HepG2 (cell line): ENCODE measurements at regions of chr12 and their contacts with region 1.

Region 1: GRCh38 chr12:29429999-29430698 is 49.2 kb upstream of the ERGIC2 start:
- DNase-seq: no peak
- ATAC-seq: no peak
- H3K4me3 ChIP-seq: no peak overlapping the region
- H3K27ac ChIP-seq: no peak overlapping the region
- H3K4me1 ChIP-seq: no peaks in the 10 kb centered on the region
- H3K27me3 ChIP-seq: no peaks in the 10 kb centered on the region
- CTCF ChIP-seq: no peak
- EP300 ChIP-seq: no peak
- POLR2A ChIP-seq: no peak
- RAD21 ChIP-seq: no peak

Region 2: DNA sequence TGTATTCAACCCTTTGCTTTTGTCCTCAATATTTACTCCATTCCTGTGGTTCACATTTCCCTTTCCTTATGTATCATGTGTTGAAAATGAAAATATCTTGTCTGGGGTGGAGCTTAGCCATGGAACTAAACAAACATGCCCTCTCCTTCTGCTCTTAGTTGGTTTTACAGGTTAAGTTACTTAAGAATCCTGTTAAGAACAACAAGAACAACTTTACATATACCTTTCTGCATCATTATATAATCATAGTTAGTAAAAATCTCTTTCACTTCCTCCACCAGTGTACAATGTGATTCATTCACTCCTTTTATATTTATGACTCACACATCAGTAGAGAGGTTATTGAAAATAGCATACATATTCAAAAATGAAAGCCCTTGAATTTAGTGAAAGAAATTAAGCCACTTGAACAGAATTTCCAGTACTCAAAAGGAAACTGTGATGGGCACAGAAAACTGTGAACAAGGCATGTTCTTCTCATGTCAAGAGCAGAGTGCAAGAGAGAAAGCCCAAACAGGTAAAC is 932.2 kb before region 1 on chr12:
- CTCF ChIA-PET with region 1: no interaction called
- POLR2A ChIA-PET with region 1: no interaction called
- in situ Hi-C with region 1: no loop called
- intact Hi-C with region 1: no loop called
- DNase-seq: no peak
- ATAC-seq: no peak
- H3K4me3 ChIP-seq: no peak overlapping the region
- H3K27ac ChIP-seq: no peak overlapping the region
- H3K4me1 ChIP-seq: no peaks in the 10 kb centered on the region
- H3K27me3 ChIP-seq: no peaks in the 10 kb centered on the region
- CTCF ChIP-seq: no peak
- EP300 ChIP-seq: no peak
- POLR2A ChIP-seq: no peak
- RAD21 ChIP-seq: no peak

Region 3: DNA sequence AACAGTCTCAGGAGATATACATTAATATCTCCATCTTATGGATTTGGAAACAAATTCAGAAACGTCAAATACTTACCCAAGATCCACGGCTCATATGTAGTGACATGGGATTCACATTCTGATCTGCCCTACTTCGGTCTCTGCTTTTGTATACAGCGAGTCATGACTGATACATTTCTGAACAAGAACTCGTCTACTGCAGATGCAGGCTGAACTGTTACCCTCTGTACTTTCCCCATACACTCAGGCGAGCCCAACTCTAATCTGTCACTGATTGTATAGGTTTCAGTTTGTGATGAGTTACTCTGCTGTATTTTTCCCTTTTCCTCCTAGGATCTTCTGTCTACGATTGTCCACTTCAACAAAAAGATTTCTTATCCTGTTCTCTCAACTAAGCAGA is 798.3 kb before region 1 on chr12:
- CTCF ChIA-PET with region 1: no interaction called
- POLR2A ChIA-PET with region 1: no interaction called
- in situ Hi-C with region 1: no loop called
- intact Hi-C with region 1: loop called (anchors 5 kb)
- DNase-seq: no peak
- ATAC-seq: no peak
- H3K4me3 ChIP-seq: no peak overlapping the region
- H3K27ac ChIP-seq: no peak overlapping the region
- H3K4me1 ChIP-seq: no peaks in the 10 kb centered on the region
- H3K27me3 ChIP-seq: no peaks in the 10 kb centered on the region
- CTCF ChIP-seq: no peak
- EP300 ChIP-seq: no peak
- POLR2A ChIP-seq: no peak
- RAD21 ChIP-seq: no peak

Region 4: DNA sequence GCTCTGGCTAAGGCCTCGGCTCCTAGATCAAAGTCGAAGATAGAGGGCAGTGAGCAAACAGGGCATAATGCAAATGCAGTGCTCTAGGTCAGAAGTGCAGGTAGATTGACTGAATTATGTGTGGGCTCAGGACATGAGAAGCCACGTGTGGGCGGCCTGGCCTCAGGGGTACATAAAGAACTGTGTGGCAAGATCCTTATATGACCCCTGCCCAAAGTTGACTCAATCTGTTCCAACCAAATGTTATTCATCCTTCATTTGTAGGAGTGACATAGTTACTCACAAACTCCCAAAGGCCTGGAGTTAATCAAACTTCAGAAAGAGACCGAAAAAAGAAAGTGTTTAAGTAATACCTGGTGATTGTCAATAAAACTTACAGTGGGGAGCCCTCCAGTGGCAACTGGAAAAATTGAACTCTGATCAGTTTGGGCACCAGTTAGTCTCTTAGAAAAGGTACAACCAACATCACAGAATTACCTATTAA is 431.5 kb before region 1 on chr12:
- CTCF ChIA-PET with region 1: no interaction called
- POLR2A ChIA-PET with region 1: no interaction called
- in situ Hi-C with region 1: no loop called
- intact Hi-C with region 1: no loop called
- DNase-seq: peak; percentile 3
- ATAC-seq: peak; percentile 68
- H3K4me3 ChIP-seq: no peak overlapping the region
- H3K27ac ChIP-seq: no peak overlapping the region
- H3K4me1 ChIP-seq: peaks cover 4% of the 10 kb centered on the region; the same call in 1 of the 2 replicates
- H3K27me3 ChIP-seq: no peaks in the 10 kb centered on the region
- CTCF ChIP-seq: peak; percentile 45
- EP300 ChIP-seq: no peak
- POLR2A ChIP-seq: no peak
- RAD21 ChIP-seq: no peak